Caco-2 (cell line): ENCODE measurements at regions of chr6 and their contacts with region 1.

Region 1: DNA sequence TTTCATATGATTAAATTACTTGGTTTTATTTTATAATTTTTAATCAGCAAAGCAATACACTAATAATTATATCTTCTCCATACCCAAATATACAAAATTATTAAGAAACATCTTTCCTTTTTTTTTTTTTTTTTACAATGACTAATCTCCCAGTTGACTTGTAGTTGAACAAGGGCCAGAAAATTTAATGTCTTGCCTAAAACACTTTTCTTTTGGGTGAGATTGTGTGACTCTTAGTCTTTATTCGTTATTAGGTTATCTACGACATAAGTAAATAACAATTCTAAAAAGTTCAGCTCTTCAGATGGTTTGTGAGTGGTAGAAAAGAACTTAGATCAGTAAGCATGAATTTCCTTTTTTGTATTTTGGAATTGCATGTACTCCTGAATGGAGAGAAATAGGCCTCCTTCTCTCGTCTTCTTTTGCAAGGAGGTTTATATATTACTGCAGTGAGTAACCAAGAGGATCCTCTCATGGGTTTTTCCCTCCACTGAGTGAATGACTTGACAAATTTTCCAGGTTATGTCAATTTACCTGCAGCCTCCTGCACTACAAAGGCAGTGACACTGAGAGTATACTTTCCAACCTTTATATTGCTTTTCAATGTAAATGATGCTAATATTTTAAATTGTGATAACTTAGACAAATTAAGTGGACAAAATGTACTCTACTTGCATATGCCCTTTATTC is 364.5 kb upstream of the CITED2 start:
- DNase-seq: no peak
- H3K4me3 ChIP-seq: no peak overlapping the region
- H3K4me3 Mint-ChIP-seq: no peak overlapping the region
- H3K27ac Mint-ChIP-seq: no peak overlapping the region
- H3K4me1 ChIP-seq: peaks cover 17% of the 10 kb centered on the region
- H3K4me1 Mint-ChIP-seq: peaks cover 7% of the 10 kb centered on the region
- H3K27me3 ChIP-seq: no peaks in the 10 kb centered on the region
- H3K27me3 Mint-ChIP-seq: no peaks in the 10 kb centered on the region
- CTCF ChIP-seq: no peak

Region 2: GRCh38 chr6:139457476-139457875 is 281.5 kb before region 1 on chr6:
- CTCF ChIA-PET with region 1: no interaction called
- POLR2A ChIA-PET with region 1: no interaction called
- intact Hi-C with region 1: no loop called
- DNase-seq: no peak
- H3K4me3 ChIP-seq: no peak overlapping the region
- H3K4me3 Mint-ChIP-seq: no peak overlapping the region
- H3K27ac Mint-ChIP-seq: no peak overlapping the region
- H3K4me1 ChIP-seq: no peaks in the 10 kb centered on the region
- H3K4me1 Mint-ChIP-seq: no peaks in the 10 kb centered on the region
- H3K27me3 ChIP-seq: no peaks in the 10 kb centered on the region
- H3K27me3 Mint-ChIP-seq: no peaks in the 10 kb centered on the region
- CTCF ChIP-seq: no peak

Region 3: DNA sequence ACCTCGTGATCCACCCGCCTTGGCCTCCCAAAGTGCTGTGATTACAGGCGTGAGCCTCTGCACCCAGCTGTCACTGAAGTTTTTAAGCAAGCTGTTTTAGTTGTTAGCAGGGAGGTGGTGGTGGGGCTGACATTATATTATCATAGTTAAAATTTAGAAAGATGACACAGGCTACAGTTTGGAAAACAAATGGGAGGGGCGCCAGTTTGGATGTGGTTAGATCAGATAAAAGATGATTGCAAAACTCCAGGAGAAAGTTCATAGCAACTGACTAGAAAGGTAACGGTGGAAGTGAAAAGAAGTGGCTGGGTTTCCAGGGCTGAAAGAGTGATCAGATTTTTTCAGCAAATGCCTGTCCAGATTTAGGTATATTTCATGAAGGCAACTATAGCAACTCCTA is 52.6 kb before region 1 on chr6:
- CTCF ChIA-PET with region 1: no interaction called
- POLR2A ChIA-PET with region 1: no interaction called
- intact Hi-C with region 1: no loop called
- DNase-seq: no peak
- H3K4me3 ChIP-seq: no peak overlapping the region
- H3K4me3 Mint-ChIP-seq: no peak overlapping the region
- H3K27ac Mint-ChIP-seq: no peak overlapping the region
- H3K4me1 ChIP-seq: peaks cover 4% of the 10 kb centered on the region; the same call in 1 of the 2 replicates
- H3K4me1 Mint-ChIP-seq: no peaks in the 10 kb centered on the region
- H3K27me3 ChIP-seq: no peaks in the 10 kb centered on the region
- H3K27me3 Mint-ChIP-seq: no peaks in the 10 kb centered on the region
- CTCF ChIP-seq: no peak

Region 4: DNA sequence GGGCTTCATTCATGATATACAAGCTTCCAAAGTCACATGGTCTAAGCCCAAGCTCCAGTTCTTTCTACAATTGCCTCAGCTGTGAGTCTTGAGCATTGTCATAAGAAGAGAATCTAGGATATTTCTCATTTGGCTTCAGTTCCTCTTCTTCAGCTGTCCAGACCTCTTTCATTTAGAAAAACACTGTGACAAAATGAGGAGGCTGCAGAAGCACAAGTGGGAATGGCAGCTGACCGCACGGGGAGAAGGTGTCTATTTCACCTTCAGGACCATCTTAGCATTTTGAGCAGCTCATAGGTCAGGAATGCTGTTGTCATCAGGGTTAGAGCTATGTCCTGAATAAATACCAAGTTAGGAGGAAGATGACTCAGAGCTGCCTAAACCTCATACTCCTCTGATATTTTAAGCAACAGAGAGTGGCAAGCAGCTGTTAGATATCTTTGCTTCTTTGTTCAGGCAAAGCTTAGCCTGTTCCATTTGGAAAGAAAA is 25.6 kb after region 1 on chr6:
- CTCF ChIA-PET with region 1: no interaction called
- POLR2A ChIA-PET with region 1: no interaction called
- intact Hi-C with region 1: loop called (anchors 1 kb)
- DNase-seq: peak; percentile 42 to 45
- H3K4me3 ChIP-seq: no peak overlapping the region
- H3K4me3 Mint-ChIP-seq: peak overlapping the region; percentile 34
- H3K27ac Mint-ChIP-seq: peak overlapping the region; percentile 78
- H3K4me1 ChIP-seq: peaks cover 54% of the 10 kb centered on the region
- H3K4me1 Mint-ChIP-seq: peaks cover 48% of the 10 kb centered on the region
- H3K27me3 ChIP-seq: no peaks in the 10 kb centered on the region
- H3K27me3 Mint-ChIP-seq: no peaks in the 10 kb centered on the region
- CTCF ChIP-seq: no peak